Activated CD8-positive, alpha-beta memory T cell treated with anti-CD3 and anti-CD28 coated beads, Interleukin-2, amount 10 ng/mL, durations not matched to agents 7 days and 5 days (primary cell): ENCODE measurements at regions of chr7 and their contacts with region 1.

Region 1: GRCh38 chr7:121366852-121367431 is 29.2 kb downstream of the FAM3C start:
- DNase-seq: no peak
- ATAC-seq: no peak
- H3K4me3 Mint-ChIP-seq: no peak overlapping the region
- H3K27ac Mint-ChIP-seq: no peak overlapping the region
- H3K4me1 Mint-ChIP-seq: peaks cover 66% of the 10 kb centered on the region
- H3K27me3 Mint-ChIP-seq: no peaks in the 10 kb centered on the region

Region 2: DNA sequence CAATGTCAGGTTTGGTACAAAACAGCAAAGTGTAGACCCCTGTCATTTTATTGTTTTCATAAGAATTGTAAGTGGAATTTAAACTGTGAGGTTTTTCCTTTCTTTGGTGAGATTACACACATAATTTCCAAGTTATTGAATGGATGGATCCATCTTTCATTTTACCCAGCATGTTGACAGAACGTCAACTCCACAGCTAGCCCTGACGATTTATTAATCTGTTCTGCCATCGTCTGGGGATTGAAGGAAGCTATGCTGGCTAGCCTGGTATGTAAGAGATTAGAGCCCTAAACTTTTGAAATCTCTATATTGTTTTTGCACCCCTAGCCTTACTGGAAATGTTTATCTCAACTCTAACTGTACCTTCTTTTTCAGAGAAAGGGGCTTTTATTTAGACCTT is 29.5 kb before region 1 on chr7:
- CTCF ChIA-PET with region 1: no interaction called
- DNase-seq: no peak
- ATAC-seq: no peak
- H3K4me3 Mint-ChIP-seq: no peak overlapping the region
- H3K27ac Mint-ChIP-seq: no peak overlapping the region
- H3K4me1 Mint-ChIP-seq: no peaks in the 10 kb centered on the region
- H3K27me3 Mint-ChIP-seq: peaks cover 24% of the 10 kb centered on the region

Region 3: DNA sequence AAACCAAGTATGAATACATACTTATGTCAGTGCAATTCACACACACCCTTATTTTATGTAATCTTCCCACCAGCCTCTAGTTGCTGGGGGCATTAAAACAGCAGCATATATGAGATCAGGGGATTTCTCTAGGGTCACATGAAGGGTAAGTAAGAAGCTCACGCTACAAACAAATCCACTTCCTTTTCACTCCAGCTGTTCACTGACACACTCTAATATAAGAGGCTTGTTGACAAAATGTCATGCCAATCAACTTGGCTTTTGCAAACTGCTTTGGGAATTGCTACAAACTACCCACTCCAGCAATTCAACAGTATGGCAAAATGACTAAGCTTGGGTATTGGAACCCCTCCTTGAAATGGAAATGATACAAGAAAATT is 18.8 kb after region 1 on chr7:
- CTCF ChIA-PET with region 1: interaction called, 77 read pairs
- DNase-seq: no peak
- ATAC-seq: peak; percentile 76
- H3K4me3 Mint-ChIP-seq: no peak overlapping the region
- H3K27ac Mint-ChIP-seq: peak overlapping the region; percentile 28
- H3K4me1 Mint-ChIP-seq: peaks cover 80% of the 10 kb centered on the region
- H3K27me3 Mint-ChIP-seq: no peaks in the 10 kb centered on the region

Region 4: GRCh38 chr7:121410829-121411596 is 44.1 kb after region 1 on chr7:
- CTCF ChIA-PET with region 1: no interaction called
- DNase-seq: no peak
- ATAC-seq: peak; percentile 23
- H3K4me3 Mint-ChIP-seq: no peak overlapping the region
- H3K27ac Mint-ChIP-seq: no peak overlapping the region
- H3K4me1 Mint-ChIP-seq: peaks cover 21% of the 10 kb centered on the region
- H3K27me3 Mint-ChIP-seq: peaks cover 2% of the 10 kb centered on the region

Region 5: DNA sequence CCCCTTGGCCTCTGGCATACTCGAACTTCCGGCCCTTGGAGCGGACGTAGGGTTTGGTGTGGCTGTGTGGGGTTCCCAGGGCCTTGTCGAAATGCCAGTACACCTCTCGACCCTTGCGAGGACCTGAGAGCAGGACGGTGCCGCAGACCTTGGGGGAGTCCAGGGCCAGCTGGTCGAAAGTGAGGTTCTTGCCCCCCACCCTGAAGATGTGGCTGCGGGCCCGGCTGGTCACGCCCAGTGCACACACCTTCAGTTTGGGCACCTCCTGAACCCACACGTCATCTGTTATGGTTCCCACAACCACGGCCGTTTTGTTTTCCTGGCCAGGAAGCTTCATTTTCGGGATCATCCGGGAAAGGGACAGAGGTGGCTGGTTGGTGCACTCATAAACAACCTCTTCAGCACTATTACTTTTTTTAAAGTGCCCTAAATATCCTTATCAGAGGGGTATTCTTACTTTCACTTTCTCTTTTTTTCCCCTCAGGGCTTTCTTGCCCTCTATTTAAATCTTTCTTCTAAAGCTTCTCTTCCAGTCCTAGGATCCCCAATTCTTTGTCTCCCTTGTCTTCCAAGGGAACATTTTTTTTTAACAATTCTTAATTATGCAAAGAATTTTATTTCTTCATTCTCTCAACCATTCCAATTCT is 74.0 kb after region 1 on chr7:
- CTCF ChIA-PET with region 1: interaction called, 18 read pairs
- DNase-seq: no peak
- ATAC-seq: peak; percentile 37
- H3K4me3 Mint-ChIP-seq: peak overlapping the region; percentile 68
- H3K27ac Mint-ChIP-seq: peak overlapping the region; percentile 85
- H3K4me1 Mint-ChIP-seq: peaks cover 35% of the 10 kb centered on the region
- H3K27me3 Mint-ChIP-seq: no peaks in the 10 kb centered on the region

Region 6: GRCh38 chr7:121547544-121548092 is 180.7 kb after region 1 on chr7:
- CTCF ChIA-PET with region 1: interaction called, 63 read pairs
- DNase-seq: no peak
- ATAC-seq: peak; percentile 71
- H3K4me3 Mint-ChIP-seq: no peak overlapping the region
- H3K27ac Mint-ChIP-seq: no peak overlapping the region
- H3K4me1 Mint-ChIP-seq: peaks cover 46% of the 10 kb centered on the region
- H3K27me3 Mint-ChIP-seq: no peaks in the 10 kb centered on the region